ENCODE measurements at regions of chr17 and their contacts with region 1.

Region 1: DNA sequence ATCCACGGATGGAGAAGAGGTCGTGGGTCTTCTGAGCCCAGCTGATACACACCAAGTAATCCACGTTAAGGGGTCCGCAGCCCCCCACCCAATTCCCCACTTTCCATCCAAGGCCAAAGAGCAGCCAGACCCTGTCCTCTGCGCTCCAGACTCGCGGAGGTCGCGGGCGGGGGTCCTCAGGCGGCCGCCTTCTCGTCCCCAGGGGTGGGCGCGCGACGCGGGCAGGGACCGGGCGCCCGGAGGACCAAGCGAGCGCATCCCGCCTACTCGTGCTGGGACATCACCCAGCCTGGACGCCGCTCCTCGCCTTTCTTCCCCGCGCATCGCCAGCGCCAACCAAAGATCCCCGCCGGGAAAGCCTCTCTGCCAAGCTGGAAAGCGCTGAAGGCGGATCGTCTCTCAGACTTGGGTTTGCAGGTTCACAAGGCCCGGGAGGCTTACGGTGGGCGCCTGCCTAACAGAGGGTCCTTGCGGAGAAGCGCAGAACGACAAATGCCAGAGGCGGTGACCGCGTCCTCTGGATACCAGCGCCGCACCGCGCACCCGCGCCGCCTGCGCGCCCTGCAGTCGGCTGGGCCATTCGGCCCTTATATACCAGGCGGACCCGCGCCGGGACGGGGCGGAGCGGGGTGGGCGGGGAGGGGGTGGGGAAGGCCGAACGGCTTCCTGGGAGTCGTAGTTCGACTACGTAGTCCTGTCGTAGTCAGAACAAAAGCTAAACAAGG is 471.6 kb downstream of the SOX9 start:
- DNase-seq: peak; percentile 67 to 86
- H3K4me3 ChIP-seq: peak overlapping the region; percentile 97
- H3K27ac ChIP-seq: peak overlapping the region; percentile 86; the same call in 1 of the 2 replicates
- H3K4me1 ChIP-seq: peaks cover 24% of the 10 kb centered on the region
- H3K27me3 ChIP-seq: no peaks in the 10 kb centered on the region
- CTCF ChIP-seq: no peak

Region 2: DNA sequence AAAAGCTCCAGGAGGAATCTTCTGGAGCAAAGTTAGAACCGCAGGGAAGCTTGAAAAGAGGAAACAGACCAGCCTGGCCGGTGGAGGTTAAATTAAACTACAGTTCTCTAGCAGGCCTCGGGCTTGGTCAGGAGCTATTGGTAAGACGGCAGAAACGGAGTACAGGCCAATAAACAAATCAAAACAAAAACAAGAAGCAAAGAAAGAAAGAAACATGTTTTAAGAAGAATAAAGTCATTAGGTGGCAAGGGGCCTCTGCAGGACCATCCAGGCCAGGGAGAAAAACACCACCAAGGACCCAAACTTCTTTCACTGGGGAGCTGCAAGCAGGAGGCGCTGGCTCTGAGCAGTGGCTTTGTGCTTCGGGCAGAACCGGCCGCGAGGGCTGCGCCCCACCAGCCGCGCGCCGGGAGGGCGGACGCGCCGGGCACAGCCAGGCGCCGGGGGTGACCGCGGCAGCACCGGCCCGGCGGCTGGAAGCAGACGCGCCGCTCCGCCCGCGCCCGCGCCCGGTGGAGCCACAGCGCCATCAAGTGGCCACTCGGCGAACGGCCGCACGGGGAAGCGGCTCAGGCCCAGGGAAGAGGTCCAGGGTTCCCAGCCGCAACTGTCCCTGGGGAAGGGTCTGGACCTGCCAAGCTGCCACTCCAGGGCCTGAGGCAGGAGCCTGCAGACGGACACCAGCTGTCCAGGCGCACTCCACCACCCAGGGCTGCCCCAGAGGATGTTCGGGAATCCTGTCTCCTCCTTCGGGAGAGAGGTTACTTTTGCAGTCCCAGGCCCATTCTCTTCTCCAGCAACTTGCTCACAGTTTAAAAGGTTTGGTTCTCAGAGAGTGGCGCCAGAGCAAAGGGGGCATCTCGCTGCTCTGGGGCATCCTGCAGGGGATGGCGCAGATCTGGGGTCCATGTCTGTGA is 52.2 kb before region 1 on chr17:
- CTCF ChIA-PET with region 1: no interaction called
- POLR2A ChIA-PET with region 1: no interaction called
- intact Hi-C with region 1: no loop called
- DNase-seq: peak; percentile 45 to 88
- H3K4me3 ChIP-seq: peak overlapping the region; percentile 46; the same call in 1 of the 2 replicates
- H3K27ac ChIP-seq: peak overlapping the region; percentile 68
- H3K4me1 ChIP-seq: peaks cover 16% of the 10 kb centered on the region
- H3K27me3 ChIP-seq: no peaks in the 10 kb centered on the region
- CTCF ChIP-seq: peak; percentile 75

Region 3: DNA sequence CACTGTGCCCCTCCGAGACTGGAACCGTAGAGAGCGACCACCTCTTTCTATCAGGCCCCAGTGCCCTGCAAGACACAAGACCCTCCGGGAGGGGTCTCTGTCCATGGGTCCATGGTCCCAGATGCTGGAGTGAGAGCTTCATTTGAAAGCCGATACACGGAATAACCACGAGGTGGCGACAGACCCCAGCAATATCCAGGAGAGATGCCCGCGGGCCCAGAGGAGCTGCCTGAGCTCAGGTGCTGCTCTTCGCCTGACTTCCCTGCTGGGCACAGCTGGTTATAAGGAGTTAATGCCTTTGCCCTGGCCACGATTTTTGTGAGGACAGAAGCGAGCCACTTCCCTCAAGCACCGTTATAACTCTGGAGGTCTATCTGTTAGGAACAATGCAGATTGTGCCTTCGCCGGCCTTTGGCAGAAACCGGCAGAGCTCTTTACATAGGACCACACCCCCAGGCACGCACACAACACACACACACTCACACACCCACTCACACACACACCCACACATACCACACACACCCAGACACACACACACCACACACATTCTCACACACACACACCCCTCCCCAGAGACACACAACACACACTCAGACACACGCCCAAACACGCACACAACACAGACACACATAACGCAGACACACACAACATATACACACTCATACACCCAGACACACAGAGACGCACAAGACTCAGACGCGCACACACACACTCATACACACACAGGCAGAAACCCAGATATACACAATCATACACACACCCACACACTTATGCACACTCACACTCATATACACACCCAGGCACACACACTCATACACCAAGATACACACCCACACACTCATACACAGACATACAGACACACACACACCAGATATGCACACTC is 35.2 kb before region 1 on chr17:
- CTCF ChIA-PET with region 1: interaction called, 4 read pairs
- POLR2A ChIA-PET with region 1: no interaction called
- intact Hi-C with region 1: loop called (anchors 2 kb)
- DNase-seq: peak; percentile 47 to 61
- H3K4me3 ChIP-seq: no peak overlapping the region
- H3K27ac ChIP-seq: no peak overlapping the region
- H3K4me1 ChIP-seq: peaks cover 14% of the 10 kb centered on the region; the same call in 1 of the 2 replicates
- H3K27me3 ChIP-seq: no peaks in the 10 kb centered on the region
- CTCF ChIP-seq: peak; percentile 85

Region 4: GRCh38 chr17:72614871-72615626 is 22.6 kb after region 1 on chr17:
- CTCF ChIA-PET with region 1: interaction called, 10 read pairs
- POLR2A ChIA-PET with region 1: no interaction called
- intact Hi-C with region 1: no loop called
- DNase-seq: no peak
- H3K4me3 ChIP-seq: no peak overlapping the region
- H3K27ac ChIP-seq: no peak overlapping the region
- H3K4me1 ChIP-seq: peaks cover 51% of the 10 kb centered on the region
- H3K27me3 ChIP-seq: no peaks in the 10 kb centered on the region
- CTCF ChIP-seq: no peak

Region 5: GRCh38 chr17:72634681-72635635 is 42.6 kb after region 1 on chr17:
- CTCF ChIA-PET with region 1: no interaction called
- POLR2A ChIA-PET with region 1: interaction called, 4 read pairs
- intact Hi-C with region 1: loop called (anchors 1 kb)
- DNase-seq: peak; percentile 71 to 73
- H3K4me3 ChIP-seq: no peak overlapping the region
- H3K27ac ChIP-seq: 0 out of 2 replicates have a peak overlapping the region, but pooled peaks have one; percentile 36
- H3K4me1 ChIP-seq: peaks cover 28% of the 10 kb centered on the region
- H3K27me3 ChIP-seq: no peaks in the 10 kb centered on the region
- CTCF ChIP-seq: no peak

Region 6: DNA sequence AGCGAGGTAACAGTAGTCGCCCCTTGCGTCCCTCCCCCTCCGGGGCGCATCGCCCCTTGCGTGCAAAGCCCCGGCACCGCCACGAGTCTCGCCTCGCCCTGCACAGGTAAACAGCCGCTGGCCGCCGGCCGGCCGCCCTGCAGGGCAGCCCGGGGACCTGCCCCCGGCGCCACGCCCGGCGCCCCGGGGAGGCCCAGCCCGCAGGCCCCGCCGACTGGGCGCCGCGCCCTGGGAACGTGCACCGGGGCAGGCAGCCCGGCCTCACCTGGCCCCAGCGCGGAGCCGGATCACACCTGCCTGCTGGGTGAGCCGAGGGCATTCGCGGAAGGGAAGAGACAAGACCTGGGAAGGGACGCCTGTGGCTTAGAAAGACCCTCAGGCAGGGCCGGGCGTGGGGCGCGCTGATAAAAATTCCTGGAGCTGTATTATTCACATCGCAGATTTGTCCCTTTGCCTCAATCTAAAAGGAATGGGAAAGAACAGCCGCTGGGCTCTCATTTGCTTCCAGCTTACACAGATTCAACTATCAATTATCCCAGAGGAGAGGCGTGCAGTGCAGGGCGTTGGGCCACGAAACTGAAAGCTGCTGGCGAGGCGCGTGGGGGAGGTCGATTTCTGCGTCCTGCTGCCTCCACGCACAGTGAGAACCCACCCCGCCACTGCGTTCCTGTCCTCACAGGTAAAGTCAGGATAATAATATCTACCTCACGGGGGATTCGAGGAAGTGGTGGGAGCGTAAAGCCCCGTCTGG is 48.2 kb after region 1 on chr17:
- CTCF ChIA-PET with region 1: no interaction called
- POLR2A ChIA-PET with region 1: interaction called, 8 read pairs
- intact Hi-C with region 1: loop called (anchors 1 kb)
- DNase-seq: peak; percentile 69 to 84
- H3K4me3 ChIP-seq: peak overlapping the region; percentile 45
- H3K27ac ChIP-seq: peak overlapping the region; percentile 46
- H3K4me1 ChIP-seq: peaks cover 24% of the 10 kb centered on the region
- H3K27me3 ChIP-seq: no peaks in the 10 kb centered on the region
- CTCF ChIP-seq: no peak

Region 7: DNA sequence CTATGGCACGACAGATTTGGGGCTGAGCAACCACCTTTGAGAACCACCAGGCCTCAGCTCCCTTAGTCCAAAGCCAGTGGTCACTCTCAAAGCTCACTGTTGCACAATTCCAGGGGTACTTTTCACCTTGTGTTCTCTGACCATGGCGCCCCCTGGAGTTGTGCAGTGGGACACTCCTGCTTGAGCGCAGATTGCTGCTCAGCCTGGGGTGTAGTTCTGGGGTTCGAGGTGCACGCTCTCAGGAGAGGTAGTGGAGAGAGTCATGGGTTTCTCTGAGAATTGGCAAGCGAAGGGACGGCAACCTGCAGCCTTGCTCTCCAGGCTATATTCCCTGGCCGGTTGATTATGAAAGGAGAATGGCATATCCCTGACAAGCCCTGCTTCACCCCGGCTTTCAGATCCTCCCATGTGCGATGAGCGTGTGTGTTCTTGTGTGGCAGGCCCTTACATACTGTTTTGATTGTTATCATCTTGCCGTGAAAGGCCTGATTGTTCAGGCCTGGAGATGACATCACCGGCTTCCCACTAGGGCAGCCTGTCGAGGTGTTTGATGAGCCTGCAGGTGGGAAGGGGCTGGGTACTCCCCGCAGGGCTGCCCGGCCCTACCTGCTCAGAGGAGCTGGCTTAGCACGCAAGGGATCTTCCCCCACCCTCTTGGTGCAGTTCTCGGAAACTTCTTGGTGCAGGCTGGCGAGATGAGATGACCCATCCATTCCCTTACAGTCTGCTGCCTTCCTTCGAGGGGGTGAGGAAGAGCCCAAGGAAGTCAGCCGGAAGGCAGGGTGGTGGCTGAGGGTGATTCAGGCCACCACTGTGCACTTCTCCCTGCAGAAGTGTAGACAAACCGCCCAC is 68.9 kb after region 1 on chr17:
- CTCF ChIA-PET with region 1: no interaction called
- POLR2A ChIA-PET with region 1: interaction called, 3 read pairs
- intact Hi-C with region 1: loop called (anchors 1 kb)
- DNase-seq: peak; percentile 90 to 98
- H3K4me3 ChIP-seq: 0 out of 2 replicates have a peak overlapping the region, but pooled peaks have one; percentile 22
- H3K27ac ChIP-seq: peak overlapping the region; percentile 92
- H3K4me1 ChIP-seq: peaks cover 44% of the 10 kb centered on the region
- H3K27me3 ChIP-seq: no peaks in the 10 kb centered on the region
- CTCF ChIP-seq: peak; percentile 63

Region 8: DNA sequence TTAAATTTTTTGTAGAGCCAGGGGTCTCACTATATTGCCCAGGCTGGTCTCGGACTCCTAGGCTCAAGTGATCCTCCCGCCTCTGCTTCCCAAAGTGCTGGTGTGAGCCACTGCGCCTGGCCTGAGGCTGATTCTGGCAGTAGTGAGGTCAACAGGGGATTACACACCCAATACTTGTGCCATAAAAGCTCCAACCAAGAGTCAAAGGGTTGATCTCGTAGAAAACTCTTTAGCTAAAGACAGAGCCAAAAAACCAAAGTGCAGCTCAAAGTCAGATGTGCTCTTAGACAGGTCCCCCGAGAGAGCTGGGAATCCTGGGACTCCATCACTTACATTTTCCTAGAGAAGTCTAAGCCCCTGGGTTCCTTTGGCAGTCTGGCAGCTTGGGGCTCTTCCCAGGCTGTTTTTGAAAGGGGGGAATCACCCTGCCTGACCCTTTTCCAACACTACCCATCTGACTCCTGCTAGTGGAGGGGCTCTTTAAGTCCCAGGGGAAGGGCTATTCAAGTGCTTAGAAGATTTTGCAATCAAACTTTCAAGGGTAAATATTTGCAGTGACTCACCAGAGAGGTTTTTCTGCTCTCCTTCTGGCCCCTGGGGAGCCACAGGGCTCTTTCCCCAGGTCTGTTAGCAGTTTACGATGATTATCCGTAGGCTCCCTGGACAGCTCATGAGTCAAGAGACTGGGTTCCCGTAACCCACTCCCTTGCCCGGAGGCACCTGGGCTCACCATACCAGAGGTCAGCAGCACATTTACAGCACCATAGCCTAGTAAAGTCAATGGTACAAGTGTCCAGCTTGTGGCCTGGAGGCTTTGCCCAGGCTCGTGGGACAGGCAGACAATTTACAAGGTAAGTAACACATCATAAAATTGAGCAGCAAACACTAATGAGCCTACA is 91.4 kb after region 1 on chr17:
- CTCF ChIA-PET with region 1: interaction called, 4 read pairs
- POLR2A ChIA-PET with region 1: interaction called, 5 read pairs
- intact Hi-C with region 1: loop called (anchors 1 kb)
- DNase-seq: peak; percentile 92 to 100
- H3K4me3 ChIP-seq: peak overlapping the region; percentile 34; the same call in 1 of the 2 replicates
- H3K27ac ChIP-seq: peak overlapping the region; percentile 86
- H3K4me1 ChIP-seq: peaks cover 62% of the 10 kb centered on the region
- H3K27me3 ChIP-seq: no peaks in the 10 kb centered on the region
- CTCF ChIP-seq: no peak

Measured in PC-9 (cell line).